ENCODE measurements at regions of chr7 and their contacts with region 1.

Region 1: GRCh38 chr7:70647801-70648498 is 484.0 kb upstream of the GALNT17 start:
- DNase-seq: peak; percentile 80 to 91 (median 87)
- H3K4me3 ChIP-seq: no peak overlapping the region
- H3K4me3 Mint-ChIP-seq: peak overlapping the region in 7 of 8 donors; percentile 29 to 79 (median 49)
- H3K27ac ChIP-seq: peak overlapping the region; percentile 28
- H3K27ac Mint-ChIP-seq: peak overlapping the region; percentile 78 to 96 (median 92)
- H3K4me1 ChIP-seq: peaks cover 20% of the 10 kb centered on the region
- H3K4me1 Mint-ChIP-seq: peaks cover 12 to 31% (median 15%) of the 10 kb centered on the region in 4 donors
- H3K27me3 ChIP-seq: no peaks in the 10 kb centered on the region
- H3K27me3 Mint-ChIP-seq: no peaks in the 10 kb centered on the region

Region 2: DNA sequence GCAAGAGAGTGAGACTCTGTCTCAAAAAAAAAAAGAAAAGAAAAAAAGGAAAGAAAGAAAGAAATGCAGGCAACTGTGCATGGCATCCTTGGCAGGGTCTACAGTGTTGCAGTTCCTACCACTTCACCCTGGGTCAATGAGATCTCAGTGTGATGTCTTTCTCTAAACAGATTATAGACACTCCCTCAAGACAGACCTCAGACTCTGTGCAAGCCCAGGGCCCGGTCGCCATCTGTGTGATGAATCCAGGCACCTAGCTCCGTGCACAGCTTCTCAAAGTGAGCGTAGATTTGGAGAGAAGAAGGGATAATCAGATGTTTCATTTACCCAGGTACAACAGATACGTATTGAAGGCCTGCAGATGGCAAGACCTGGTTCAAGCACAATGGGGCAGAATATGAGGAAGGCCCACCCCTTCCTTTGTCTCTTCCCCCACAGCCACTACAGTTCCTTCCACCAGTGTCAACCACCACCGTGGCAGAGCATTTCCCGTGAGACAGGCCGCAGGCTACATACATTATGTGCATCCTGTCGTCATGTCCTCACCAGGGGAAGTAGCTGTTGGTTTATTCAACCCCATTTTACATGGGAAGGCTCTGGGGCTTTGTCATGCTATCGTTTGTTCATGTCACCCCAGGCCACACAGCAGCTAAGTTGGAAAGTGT is 12.3 kb after region 1 on chr7:
- CTCF ChIA-PET with region 1: interaction called, 5 read pairs
- POLR2A ChIA-PET with region 1: interaction called, 35 read pairs
- intact Hi-C with region 1: no loop called
- DNase-seq: peak; percentile 57 to 75 (median 71)
- H3K4me3 ChIP-seq: no peak overlapping the region
- H3K4me3 Mint-ChIP-seq: peak overlapping the region in 3 of 8 donors; percentile 26 to 44 (median 33)
- H3K27ac ChIP-seq: no peak overlapping the region
- H3K27ac Mint-ChIP-seq: peak overlapping the region; percentile 40 to 94 (median 89)
- H3K4me1 ChIP-seq: peaks cover 22% of the 10 kb centered on the region
- H3K4me1 Mint-ChIP-seq: peaks cover 9 to 25% (median 20%) of the 10 kb centered on the region in 4 donors
- H3K27me3 ChIP-seq: no peaks in the 10 kb centered on the region
- H3K27me3 Mint-ChIP-seq: no peaks in the 10 kb centered on the region

Region 3: DNA sequence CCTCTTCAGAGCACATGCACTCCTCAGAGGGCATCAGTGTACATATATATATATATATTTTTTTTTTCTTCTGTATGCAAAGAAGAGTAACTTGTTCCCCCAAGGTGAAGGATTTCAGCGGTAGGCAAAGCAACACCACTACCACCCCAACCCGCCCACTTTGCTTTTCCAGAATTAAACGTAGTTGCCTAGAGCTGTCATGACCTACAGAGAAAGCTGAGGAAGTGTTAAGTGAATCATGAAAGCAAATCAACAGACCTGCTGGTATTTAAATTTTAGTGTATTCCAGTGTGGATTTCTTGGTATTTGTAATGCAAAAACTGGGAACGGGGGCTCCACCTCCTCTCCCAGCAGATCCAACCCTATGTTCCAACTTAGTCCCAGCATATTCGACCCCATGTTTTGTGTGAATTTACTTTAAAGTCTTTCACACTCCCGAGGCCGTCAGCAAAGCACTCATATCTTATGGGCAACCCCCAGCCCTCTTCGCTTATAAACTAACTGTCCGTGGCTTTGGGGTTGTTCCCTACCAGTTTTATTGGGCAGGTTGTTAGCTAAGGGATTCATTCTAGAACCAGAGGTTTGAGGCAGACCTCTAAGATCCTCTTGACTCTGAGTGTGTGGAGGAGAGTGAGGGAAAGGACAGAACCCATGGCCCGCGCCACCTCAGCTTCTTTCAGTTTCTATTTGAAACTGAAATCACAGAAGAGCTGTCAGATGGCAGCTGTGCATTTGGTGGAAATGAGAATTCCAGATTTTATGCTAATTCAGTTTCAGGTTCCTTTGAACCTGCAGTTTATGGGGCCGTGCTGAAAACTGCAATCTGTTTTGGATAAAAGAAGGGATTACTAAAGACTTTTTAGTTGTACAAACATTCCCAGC is 33.8 kb after region 1 on chr7:
- CTCF ChIA-PET with region 1: no interaction called
- POLR2A ChIA-PET with region 1: interaction called, 12 read pairs
- intact Hi-C with region 1: no loop called
- DNase-seq: peak in 2 of 5 donors; percentile 30 to 46
- H3K4me3 ChIP-seq: peak overlapping the region in 1 of 2 donors; percentile 2
- H3K4me3 Mint-ChIP-seq: peak overlapping the region; percentile 83 to 90 (median 86)
- H3K27ac ChIP-seq: peak overlapping the region; percentile 50
- H3K27ac Mint-ChIP-seq: peak overlapping the region; percentile 75 to 98 (median 95)
- H3K4me1 ChIP-seq: peaks cover 16% of the 10 kb centered on the region
- H3K4me1 Mint-ChIP-seq: peaks cover 19 to 46% (median 33%) of the 10 kb centered on the region in 4 donors
- H3K27me3 ChIP-seq: no peaks in the 10 kb centered on the region
- H3K27me3 Mint-ChIP-seq: peaks cover 0 to 1% of the 10 kb centered on the region in 2 donors

Region 4: DNA sequence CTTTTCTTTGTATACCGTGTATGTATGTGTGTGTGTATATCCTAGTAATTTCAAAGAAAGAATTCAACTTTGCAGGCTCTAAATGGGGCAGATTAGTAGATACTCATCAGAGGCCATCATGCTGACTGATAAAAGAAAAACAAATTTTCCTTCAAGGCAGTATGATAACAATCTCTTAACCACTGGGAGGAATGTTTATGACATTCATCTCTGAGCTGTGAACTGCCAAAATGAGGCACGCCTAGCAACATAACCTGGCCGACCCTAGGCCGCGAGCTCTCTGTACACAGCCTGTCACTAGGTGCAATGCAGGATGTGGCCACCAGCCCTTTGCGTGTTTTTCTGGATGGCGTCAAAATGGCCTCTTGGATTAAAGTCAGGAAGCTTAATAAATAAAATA is 140.3 kb after region 1 on chr7:
- CTCF ChIA-PET with region 1: no interaction called
- POLR2A ChIA-PET with region 1: interaction called, 3 read pairs
- intact Hi-C with region 1: loop called (anchors 1 kb)
- DNase-seq: peak; percentile 68 to 90 (median 81)
- H3K4me3 ChIP-seq: no peak overlapping the region
- H3K4me3 Mint-ChIP-seq: peak overlapping the region in 7 of 8 donors; percentile 54 to 86 (median 77)
- H3K27ac ChIP-seq: peak overlapping the region; percentile 60
- H3K27ac Mint-ChIP-seq: peak overlapping the region; percentile 95 to 99 (median 98)
- H3K4me1 ChIP-seq: peaks cover 39% of the 10 kb centered on the region
- H3K4me1 Mint-ChIP-seq: peaks cover 24 to 54% (median 34%) of the 10 kb centered on the region in 4 donors
- H3K27me3 ChIP-seq: no peaks in the 10 kb centered on the region
- H3K27me3 Mint-ChIP-seq: no peaks in the 10 kb centered on the region

Region 5: GRCh38 chr7:71761336-71761735 is 1113.4 kb after region 1 on chr7:
- CTCF ChIA-PET with region 1: no interaction called
- POLR2A ChIA-PET with region 1: no interaction called
- intact Hi-C with region 1: no loop called
- DNase-seq: no peak
- H3K4me3 ChIP-seq: no peak overlapping the region
- H3K4me3 Mint-ChIP-seq: no peak overlapping the region
- H3K27ac ChIP-seq: no peak overlapping the region
- H3K27ac Mint-ChIP-seq: peak overlapping the region in 1 of 7 donors; percentile 30
- H3K4me1 ChIP-seq: no peaks in the 10 kb centered on the region
- H3K4me1 Mint-ChIP-seq: no peaks in the 10 kb centered on the region
- H3K27me3 ChIP-seq: no peaks in the 10 kb centered on the region
- H3K27me3 Mint-ChIP-seq: peaks cover 0 to 1% of the 10 kb centered on the region in 2 donors